ENCODE measurements at regions of chr2 and their contacts with region 1.

Region 1: DNA sequence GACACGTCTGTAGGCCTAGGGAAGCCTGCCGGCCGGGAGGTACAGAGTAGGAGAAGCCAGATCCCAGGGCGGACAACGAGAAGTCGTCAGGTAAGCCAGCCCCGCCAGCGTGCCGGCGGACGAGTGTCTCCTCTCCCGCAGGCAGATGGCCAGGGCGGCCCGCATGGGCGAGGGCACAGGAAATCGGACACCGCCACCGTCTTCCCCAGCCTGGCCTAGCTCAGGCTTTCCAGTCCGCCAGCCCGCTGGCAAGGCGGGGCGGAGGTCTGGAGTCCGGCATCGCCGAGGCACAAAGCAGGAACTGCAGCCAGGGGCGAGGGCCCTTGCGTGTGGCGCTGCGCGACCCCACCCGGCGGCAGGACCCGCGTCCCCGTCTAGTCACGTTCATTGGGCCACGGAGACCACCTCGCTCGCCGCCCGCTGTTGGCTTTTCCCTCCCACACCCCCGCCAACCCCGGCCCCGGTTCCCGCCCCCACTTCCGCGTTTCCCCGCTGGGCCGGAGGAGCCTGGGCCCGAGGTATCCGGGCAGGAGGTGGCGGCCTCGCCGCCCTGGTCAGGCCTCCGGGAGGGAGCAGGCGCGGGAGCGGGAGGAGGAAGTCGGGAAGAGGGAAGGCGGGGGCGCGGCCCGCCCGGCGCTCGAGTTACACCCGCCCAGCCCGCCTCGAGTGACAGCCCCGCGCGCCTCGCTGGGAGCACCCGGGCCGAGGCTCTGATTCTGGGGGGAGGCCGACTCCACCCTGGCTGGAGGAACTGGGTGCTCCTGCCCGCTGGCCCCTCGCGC is at the start of gene GPD2:
- DNase-seq: peak; percentile 88
- H3K4me3 Mint-ChIP-seq: peak within 1 kb of the TSS; percentile 95
- H3K27ac Mint-ChIP-seq: peak within 1 kb of the TSS; percentile 86
- H3K4me1 Mint-ChIP-seq: peaks cover 52% of the 10 kb centered on the region
- H3K27me3 Mint-ChIP-seq: no peaks in the 10 kb centered on the region
- CTCF ChIP-seq: no peak
- total RNA-seq, gene GPD2: 55.4 and 60.0 TPM in 2 replicates

Region 2: DNA sequence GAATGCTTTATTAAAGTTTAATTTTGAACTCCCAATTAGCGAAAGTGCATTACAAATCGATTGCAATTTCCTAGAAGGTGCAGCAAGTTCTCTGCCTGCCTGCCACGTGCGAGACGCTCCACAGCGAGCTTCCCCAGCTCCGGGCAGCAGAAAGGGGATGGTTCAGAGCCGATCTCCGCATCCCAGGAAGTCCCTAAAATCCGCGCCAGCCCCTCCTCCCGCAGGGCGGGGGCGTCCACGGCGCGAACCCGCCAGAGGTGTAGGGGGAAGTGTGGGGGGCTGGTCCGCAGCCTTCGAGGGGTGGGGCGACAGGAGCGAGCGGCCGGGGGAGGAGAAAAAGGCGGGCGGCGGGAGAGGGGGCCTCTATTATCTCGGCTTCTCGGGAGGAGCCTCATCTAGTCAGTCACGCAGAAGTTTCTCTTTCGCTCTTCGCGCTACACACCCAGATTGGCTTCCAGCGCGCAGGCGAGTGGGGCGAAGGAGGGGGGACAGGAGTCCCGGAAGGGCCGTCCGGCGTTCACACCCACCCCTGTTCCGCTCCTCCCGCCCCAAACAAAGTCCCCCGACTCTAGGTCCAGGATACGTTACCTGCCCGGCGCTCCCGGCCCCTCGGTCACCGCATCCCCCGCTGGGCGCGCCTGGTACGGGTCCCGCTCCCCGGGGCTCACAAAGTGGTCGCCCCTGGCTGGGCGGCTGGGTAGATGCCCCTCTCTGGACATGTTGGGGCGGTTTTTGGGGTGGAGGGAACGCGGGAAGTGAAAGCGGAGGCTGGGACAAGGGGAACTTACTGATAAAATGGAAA is 94.3 kb before region 1 on chr2:
- CTCF ChIA-PET with region 1: no interaction called
- intact Hi-C with region 1: loop called (anchors 2 kb)
- DNase-seq: peak; percentile 90
- H3K4me3 Mint-ChIP-seq: peak overlapping the region; percentile 94
- H3K27ac Mint-ChIP-seq: peak overlapping the region; percentile 95
- H3K4me1 Mint-ChIP-seq: peaks cover 35% of the 10 kb centered on the region
- H3K27me3 Mint-ChIP-seq: no peaks in the 10 kb centered on the region
- CTCF ChIP-seq: no peak

Region 3: DNA sequence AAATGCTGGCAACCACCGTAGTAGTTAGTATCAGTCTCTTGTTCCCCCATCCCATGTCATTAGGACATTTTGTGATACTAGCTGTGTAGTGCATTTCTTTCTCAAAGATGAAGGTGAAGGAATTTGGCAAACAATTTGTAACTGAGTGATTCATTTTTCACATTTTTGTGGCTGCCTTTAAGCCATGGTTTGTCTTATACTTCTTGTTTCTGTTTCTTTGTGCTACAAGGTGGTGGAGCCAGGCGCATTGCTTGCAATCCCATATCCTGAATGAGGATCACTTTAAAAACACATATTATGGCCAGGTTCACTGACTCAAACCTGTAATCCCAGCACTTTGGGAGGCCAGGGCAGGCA is 40.9 kb after region 1 on chr2:
- CTCF ChIA-PET with region 1: no interaction called
- intact Hi-C with region 1: loop called (anchors 5 kb)
- DNase-seq: no peak
- H3K4me3 Mint-ChIP-seq: peak overlapping the region; percentile 40
- H3K27ac Mint-ChIP-seq: peak overlapping the region; percentile 86
- H3K4me1 Mint-ChIP-seq: peaks cover 27% of the 10 kb centered on the region
- H3K27me3 Mint-ChIP-seq: no peaks in the 10 kb centered on the region
- CTCF ChIP-seq: no peak

Region 4: DNA sequence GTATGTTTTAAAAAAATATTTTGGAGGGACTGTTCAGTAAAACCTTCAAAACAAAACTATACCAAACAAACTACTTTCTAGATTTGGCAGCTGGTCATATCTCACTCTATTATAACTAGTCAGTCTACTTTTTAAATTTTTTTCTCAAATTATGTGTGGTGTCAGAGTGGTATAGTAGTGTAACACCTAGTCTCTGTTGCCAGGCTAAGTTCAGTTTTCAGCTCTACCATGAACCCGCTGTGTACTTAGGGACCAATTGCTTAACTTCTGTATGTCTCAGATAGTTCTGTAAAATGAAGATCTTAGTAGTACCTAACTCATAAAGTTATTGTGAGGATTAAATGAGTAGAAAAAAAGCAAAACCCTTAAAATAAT is 54.5 kb after region 1 on chr2:
- CTCF ChIA-PET with region 1: no interaction called
- intact Hi-C with region 1: loop called (anchors 5 kb)
- DNase-seq: no peak
- H3K4me3 Mint-ChIP-seq: no peak overlapping the region
- H3K27ac Mint-ChIP-seq: no peak overlapping the region
- H3K4me1 Mint-ChIP-seq: peaks cover 14% of the 10 kb centered on the region
- H3K27me3 Mint-ChIP-seq: no peaks in the 10 kb centered on the region
- CTCF ChIP-seq: no peak

Region 5: GRCh38 chr2:156538083-156538504 is 102.2 kb after region 1 on chr2:
- CTCF ChIA-PET with region 1: no interaction called
- intact Hi-C with region 1: loop called (anchors 5 kb)
- DNase-seq: no peak
- H3K4me3 Mint-ChIP-seq: no peak overlapping the region
- H3K27ac Mint-ChIP-seq: no peak overlapping the region
- H3K4me1 Mint-ChIP-seq: peaks cover 10% of the 10 kb centered on the region
- H3K27me3 Mint-ChIP-seq: no peaks in the 10 kb centered on the region
- CTCF ChIP-seq: no peak